AG04450 (cell line): ENCODE measurements at regions of chr2 and their contacts with region 1.

Region 1: DNA sequence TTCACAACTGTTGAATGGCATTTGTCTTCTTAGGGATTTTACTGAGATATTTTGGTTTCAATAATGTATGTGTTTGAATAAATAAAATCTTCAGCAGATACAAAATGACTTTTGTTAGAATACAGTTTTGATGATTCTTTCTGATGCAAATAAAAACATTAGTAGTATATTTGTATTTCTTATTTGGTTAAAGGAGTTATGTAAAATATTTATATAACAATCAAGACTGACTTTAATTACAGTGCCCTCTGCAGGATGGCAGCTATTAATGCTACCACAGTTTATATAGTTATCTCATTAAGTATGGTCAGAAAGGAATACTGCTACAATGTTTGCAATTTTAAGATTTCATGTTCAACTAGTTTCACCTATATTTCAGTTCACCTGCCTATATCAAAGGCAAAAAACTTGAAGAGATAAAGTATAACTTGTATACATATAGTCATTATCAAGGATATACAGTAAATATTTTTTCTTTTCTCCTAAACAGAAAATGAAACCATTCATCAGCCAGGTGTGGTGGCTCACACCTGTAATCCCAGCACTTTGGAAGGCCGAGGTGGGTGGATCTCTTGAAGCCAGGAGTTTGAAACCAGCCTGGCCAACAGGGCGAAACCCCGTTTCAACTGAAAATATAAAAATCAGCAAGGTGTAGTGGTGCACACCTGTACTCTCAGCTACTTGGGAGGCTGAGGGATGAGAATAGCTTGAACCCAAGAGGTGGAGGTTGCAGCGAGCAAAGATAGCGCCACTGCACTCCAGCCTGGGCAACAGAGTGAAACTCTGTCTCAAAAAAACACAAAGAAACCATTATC is 19.8 kb downstream of the ARL5A start:
- DNase-seq: no peak
- H3K4me3 ChIP-seq: no peak overlapping the region
- H3K27ac ChIP-seq: no peak overlapping the region
- H3K27me3 ChIP-seq: no peaks in the 10 kb centered on the region
- CTCF ChIP-seq: peak; percentile 53

Region 2: DNA sequence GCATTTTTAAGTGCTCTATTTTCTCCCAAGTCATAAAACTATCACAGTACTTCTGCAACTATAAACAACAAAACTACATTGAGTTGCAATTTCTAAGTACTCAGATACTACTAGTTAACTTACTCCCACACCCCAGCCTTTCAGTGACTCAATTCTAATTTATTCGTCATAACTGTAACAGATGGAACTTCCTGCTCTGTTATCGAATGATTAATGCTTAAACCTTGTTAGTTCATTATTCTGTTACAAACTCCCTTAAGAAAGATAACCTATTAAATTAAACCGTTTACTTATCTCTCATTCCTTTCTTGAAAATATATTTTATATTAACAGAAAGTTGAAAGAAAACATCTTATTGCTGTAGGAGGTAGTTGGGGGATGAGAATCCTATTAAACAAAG is 434.0 kb before region 1 on chr2:
- CTCF ChIA-PET with region 1: no interaction called
- POLR2A ChIA-PET with region 1: no interaction called
- DNase-seq: peak; percentile 47
- H3K4me3 ChIP-seq: no peak overlapping the region
- H3K27ac ChIP-seq: peak overlapping the region; percentile 39
- H3K27me3 ChIP-seq: no peaks in the 10 kb centered on the region
- CTCF ChIP-seq: no peak

Region 3: DNA sequence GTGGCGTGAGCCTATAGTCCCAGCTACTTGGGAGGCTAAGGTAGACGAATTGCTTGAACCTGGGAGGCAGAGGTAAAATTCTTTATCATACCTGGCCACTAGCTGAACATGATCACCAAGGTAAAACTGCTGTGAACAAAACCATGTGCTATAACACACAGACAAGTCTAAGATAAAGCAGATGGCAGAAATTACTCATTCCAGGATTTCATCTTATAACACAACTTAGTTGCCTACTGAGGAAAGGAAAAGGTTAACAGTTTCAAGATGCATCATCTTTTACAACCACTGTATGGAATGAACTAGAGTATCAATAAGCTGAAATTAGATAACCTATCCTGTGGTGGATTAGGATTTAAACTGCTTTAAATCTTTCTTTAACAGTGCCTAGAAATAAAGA is 11.5 kb after region 1 on chr2:
- CTCF ChIA-PET with region 1: interaction called, 11 read pairs
- POLR2A ChIA-PET with region 1: no interaction called
- DNase-seq: no peak
- H3K4me3 ChIP-seq: no peak overlapping the region
- H3K27ac ChIP-seq: no peak overlapping the region
- H3K27me3 ChIP-seq: no peaks in the 10 kb centered on the region
- CTCF ChIP-seq: no peak